OCI-LY7 (cell line): ENCODE measurements at regions of chr11 and their contacts with region 1.

Region 1: DNA sequence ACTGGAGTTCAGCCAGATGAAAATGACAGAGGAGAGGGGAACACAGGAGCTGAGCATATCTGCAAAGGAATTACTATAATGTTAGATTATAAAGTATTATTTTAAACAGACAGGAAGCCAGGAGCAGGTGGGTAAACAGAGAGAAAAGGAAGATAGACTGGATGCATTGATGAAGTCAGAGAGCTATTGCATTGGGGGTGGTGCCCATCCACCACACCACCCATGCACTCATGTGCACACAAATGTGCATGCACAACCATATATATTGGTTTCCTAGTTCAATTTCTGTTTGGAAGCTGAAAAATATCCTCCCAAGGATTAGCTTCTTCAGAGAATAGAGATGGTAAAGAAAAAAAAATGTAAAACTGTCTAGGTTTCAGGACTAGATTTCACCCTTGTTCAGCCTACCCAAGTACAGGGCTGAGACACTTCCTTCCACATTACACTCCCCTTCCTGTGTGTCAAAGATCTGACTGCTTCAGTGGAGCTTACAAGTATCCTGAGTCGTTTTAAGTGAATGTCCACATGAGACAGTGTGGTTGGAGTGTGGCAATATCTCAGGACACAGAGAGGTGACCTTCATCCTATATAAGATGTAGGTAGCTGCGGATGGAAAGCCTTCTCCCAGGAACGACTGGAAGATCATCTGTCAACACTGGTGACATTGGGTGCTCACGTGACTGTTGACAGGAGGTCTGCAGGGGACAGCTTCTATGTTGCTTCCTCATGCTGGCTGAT is 12.2 kb upstream of the SMPD1 start:
- DNase-seq: peak; percentile 33
- H3K4me3 ChIP-seq: no peak overlapping the region
- H3K27ac ChIP-seq: no peak overlapping the region
- H3K4me1 ChIP-seq: peaks cover 16% of the 10 kb centered on the region
- CTCF ChIP-seq: no peak

Region 2: GRCh38 chr11:6273188-6273587 is 104.9 kb before region 1 on chr11:
- CTCF ChIA-PET with region 1: no interaction called
- POLR2A ChIA-PET with region 1: no interaction called
- intact Hi-C with region 1: no loop called
- DNase-seq: no peak
- H3K4me3 ChIP-seq: no peak overlapping the region
- H3K27ac ChIP-seq: no peak overlapping the region
- H3K4me1 ChIP-seq: no peaks in the 10 kb centered on the region
- CTCF ChIP-seq: no peak

Region 3: GRCh38 chr11:6389921-6390724 is 12.1 kb after region 1 on chr11 and contains the start of gene SMPD1:
- CTCF ChIA-PET with region 1: interaction called, 4 read pairs
- POLR2A ChIA-PET with region 1: interaction called, 11 read pairs
- intact Hi-C with region 1: no loop called
- DNase-seq: peak; percentile 93
- H3K4me3 ChIP-seq: peak within 1 kb of the TSS; percentile 73
- H3K27ac ChIP-seq: peak within 1 kb of the TSS; percentile 22
- H3K4me1 ChIP-seq: peaks cover 24% of the 10 kb centered on the region
- CTCF ChIP-seq: no peak
- total RNA-seq, gene SMPD1: 5.1 and 5.4 TPM in 2 replicates

Region 4: GRCh38 chr11:6505577-6506240 is 127.6 kb after region 1 on chr11:
- CTCF ChIA-PET with region 1: interaction called, 26 read pairs
- POLR2A ChIA-PET with region 1: interaction called, 5 read pairs
- intact Hi-C with region 1: loop called (anchors 1 kb)
- DNase-seq: peak; percentile 65
- H3K4me3 ChIP-seq: no peak overlapping the region
- H3K27ac ChIP-seq: no peak overlapping the region
- H3K4me1 ChIP-seq: no peaks in the 10 kb centered on the region
- CTCF ChIP-seq: peak; percentile 99

Region 5: DNA sequence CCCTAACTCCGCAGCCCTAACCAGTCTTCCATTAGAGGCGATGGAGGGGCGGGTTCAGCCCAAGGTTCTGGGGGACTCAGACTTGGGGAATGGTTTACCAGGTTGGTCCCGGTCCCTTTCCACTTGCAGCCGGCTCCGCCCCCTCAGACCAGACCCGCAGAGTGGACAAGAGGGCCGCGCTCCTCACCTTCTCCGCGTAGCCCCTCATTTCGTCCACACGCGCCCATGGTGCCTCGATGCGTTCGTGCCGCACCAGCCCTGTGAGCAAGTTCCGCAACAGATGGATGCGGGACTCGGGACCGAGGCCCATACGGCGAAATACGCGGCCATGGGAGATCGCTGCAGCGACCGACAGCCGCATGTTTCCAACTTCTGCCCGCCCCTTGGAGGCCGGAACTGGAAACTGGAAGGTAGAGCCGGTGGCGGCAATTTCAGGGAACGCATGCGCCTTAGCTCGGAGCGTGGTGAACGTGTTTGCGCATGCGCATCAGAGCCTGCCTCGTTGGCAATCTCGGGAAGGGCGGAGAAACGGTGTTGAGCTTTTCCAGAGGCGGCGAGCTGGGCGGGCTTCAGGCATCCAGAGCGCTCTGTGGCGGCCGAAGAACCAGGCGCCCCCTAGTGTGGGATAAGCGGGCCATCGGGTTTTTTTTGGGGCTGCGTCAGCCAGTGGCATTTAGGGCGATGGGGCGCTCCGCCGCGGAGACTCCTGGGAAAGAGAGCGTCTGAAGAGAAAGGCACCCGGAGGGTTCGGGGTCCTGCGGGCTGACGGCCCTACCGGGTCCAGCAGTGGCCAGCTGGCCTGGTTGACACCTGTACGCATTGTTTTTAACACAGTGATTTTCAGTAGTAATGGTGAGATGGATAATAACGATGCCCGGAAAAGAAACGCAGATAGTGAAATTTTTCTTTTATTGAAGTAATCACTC is 305.1 kb after region 1 on chr11 and contains the start of gene MRPL17:
- CTCF ChIA-PET with region 1: no interaction called
- POLR2A ChIA-PET with region 1: interaction called, 3 read pairs
- intact Hi-C with region 1: loop called (anchors 2 kb)
- DNase-seq: peak; percentile 100
- H3K4me3 ChIP-seq: peak within 1 kb of the TSS; percentile 85
- H3K27ac ChIP-seq: peak within 1 kb of the TSS; percentile 57
- H3K4me1 ChIP-seq: peaks cover 15% of the 10 kb centered on the region
- CTCF ChIP-seq: peak; percentile 87
- total RNA-seq, gene MRPL17: 46.8 and 59.7 TPM in 2 replicates